Activated T-helper 1 cell treated with anti-CD3 and anti-CD28 coated beads, Interleukin-12 subunit alpha, Interleukin-12 subunit beta, Interleukin-2, Interleukin-4 antibody, amounts not matched to agents 30 ng/mL and 10 ng/mL and 1 ng/mL, durations not matched to agents 14 hours and 24 hours and 36 hours (primary cell): ENCODE measurements at regions of chr14 and their contacts with region 1.

Region 1: DNA sequence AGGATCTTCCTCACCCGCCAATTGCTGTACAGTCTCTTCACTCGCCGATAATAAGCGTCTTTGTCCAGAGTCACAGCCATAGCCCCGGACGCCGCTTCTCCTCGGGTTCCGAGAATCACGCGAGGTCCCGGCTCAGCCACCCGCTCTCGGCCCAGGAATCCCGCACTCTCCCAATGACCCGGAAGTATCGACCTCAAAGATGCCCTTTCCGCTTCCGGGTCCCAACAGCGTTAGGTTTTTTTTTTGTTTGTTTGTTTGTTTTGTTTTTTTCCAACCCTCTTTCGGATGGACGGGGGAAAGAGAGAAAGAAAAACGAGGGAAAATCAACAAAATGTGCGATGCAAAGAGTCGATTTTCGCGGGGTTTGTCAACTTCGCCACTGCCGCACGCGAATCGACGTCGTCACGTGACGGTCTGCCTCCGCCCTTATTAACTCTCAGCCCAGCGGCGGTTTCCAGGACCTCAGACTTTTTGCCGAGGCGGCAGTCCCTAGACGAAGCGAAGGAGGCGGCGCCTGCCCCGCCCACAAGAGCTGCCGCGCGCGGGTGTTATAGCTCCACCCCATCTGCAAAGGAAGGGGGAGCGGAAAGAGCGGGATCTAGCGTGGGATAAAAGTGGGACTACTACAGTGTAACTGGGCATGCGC is at the start of gene SUPT16H:
- DNase-seq: peak; percentile 92
- H3K4me3 Mint-ChIP-seq: peak within 1 kb of the TSS; percentile 96
- H3K27ac Mint-ChIP-seq: peak within 1 kb of the TSS; percentile 100
- H3K4me1 Mint-ChIP-seq: peaks cover 40% of the 10 kb centered on the region
- H3K27me3 Mint-ChIP-seq: no peaks in the 10 kb centered on the region
- total RNA-seq, gene SUPT16H: 162 and 166 TPM in 2 replicates

Region 2: GRCh38 chr14:21103710-21104447 is 280.1 kb before region 1 on chr14:
- intact Hi-C with region 1: loop called (anchors 1 kb)
- DNase-seq: peak; percentile 92
- H3K4me3 Mint-ChIP-seq: peak overlapping the region; percentile 93
- H3K27ac Mint-ChIP-seq: peak overlapping the region; percentile 97
- H3K4me1 Mint-ChIP-seq: peaks cover 56% of the 10 kb centered on the region
- H3K27me3 Mint-ChIP-seq: peaks cover 6% of the 10 kb centered on the region

Region 3: DNA sequence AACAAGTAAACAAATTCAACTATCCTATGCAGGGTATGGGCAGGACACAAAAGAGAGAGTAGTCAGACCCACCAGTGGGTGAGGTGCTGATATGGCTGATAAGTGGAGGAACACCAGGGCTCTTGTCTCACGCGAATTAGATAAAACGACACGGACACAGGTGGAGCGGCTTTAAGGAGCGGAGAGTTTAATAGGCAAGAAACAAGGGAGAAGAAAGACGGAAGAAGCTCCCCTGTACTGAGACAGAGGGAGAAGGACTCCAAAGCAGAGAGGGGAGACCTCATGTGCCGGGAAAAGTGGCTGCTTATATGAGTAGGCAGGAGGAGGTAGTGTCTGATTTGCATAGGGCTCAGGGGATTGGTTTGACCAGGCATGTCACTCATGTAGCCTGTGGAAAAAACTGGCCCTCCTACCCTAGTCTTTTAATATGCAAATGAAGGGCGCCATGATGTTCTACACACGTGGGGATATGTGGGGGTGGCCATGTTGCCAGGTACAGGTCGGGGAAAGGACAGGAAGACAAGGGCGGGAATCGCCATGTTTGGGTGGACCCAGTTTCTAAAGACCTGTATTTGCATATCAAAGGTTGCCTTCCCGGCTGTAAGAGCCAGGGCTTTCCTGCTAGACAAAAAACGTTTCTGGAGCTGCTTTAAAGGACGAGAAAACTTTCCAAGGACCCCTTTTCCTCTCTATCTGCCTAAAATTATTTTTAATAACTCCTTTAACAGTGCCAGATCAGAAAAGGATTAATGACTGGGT is 75.3 kb before region 1 on chr14:
- intact Hi-C with region 1: loop called (anchors 1 kb)
- DNase-seq: peak; percentile 65
- H3K4me3 Mint-ChIP-seq: peak overlapping the region; percentile 64
- H3K27ac Mint-ChIP-seq: peak overlapping the region; percentile 64
- H3K4me1 Mint-ChIP-seq: peaks cover 16% of the 10 kb centered on the region
- H3K27me3 Mint-ChIP-seq: peaks cover 3% of the 10 kb centered on the region

Region 4: GRCh38 chr14:21326972-21327371 is 57.0 kb before region 1 on chr14:
- intact Hi-C with region 1: no loop called
- DNase-seq: no peak
- H3K4me3 Mint-ChIP-seq: no peak overlapping the region
- H3K27ac Mint-ChIP-seq: no peak overlapping the region
- H3K4me1 Mint-ChIP-seq: no peaks in the 10 kb centered on the region
- H3K27me3 Mint-ChIP-seq: peaks cover 7% of the 10 kb centered on the region

Region 5: DNA sequence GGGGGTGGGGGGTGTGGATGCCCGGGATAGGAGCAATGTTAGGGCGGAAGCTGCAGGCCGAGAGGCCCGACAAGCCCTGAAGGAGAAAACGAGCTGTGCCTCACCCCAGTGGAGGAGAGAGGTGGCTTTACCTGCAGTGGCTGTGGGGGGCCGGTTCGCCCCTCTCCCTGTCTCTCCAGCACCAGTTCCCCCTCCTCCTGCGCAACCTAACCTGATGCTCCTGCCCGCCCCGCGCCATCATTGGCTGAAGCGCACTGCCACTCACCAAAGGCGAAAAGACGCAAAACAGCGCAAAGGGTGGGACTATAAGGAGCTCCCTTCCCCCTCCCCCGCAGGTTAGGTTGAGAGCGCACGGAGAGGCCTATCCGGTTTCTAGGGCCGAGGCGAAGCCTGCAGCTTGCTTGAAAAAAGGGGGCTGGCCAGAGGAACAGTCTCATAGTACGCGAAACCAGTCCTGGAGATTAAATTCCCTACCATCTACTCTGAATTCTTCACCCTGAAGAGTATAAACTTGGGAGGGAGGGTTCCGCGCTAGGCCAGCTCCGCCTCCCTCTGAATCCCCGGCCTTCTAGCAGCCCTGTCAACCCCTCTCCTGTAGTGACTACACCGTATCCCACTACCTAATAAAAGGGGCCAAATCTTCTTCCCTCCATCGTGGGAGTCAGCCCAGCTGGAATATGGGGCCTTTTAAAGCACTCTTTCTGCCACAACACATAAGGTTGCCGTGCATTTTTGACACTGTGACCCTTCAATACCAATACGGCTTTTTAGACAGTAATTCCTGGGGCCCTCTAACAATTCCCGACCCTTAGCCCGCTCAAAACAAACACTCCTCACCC is 53.3 kb after region 1 on chr14:
- intact Hi-C with region 1: loop called (anchors 1 kb)
- DNase-seq: peak; percentile 97
- H3K4me3 Mint-ChIP-seq: peak overlapping the region; percentile 93
- H3K27ac Mint-ChIP-seq: peak overlapping the region; percentile 73
- H3K4me1 Mint-ChIP-seq: peaks cover 67% of the 10 kb centered on the region
- H3K27me3 Mint-ChIP-seq: no peaks in the 10 kb centered on the region

Region 6: DNA sequence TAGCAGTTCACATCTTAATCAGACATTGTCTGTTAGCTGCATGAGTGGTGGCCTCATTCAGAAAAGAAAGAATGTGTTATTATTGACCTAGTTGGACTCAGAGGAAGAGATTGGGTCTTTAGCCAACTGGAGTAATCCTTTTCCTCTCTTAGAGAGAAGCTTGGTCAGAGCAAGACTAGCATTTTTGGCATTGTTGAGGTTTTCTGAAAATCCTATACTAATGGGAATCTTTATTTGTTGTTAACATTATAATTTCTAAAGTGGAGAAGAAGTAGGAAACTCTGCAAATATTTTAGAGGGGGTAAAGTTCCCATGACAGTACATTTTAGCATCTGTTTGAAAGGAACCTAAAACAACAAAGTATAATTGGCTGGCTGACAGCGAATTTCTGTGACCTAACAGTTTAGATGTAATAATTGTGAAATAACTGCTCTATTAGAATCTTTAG is 102.7 kb after region 1 on chr14:
- intact Hi-C with region 1: no loop called
- DNase-seq: no peak
- H3K4me3 Mint-ChIP-seq: no peak overlapping the region
- H3K27ac Mint-ChIP-seq: no peak overlapping the region
- H3K4me1 Mint-ChIP-seq: no peaks in the 10 kb centered on the region
- H3K27me3 Mint-ChIP-seq: no peaks in the 10 kb centered on the region

Region 7: DNA sequence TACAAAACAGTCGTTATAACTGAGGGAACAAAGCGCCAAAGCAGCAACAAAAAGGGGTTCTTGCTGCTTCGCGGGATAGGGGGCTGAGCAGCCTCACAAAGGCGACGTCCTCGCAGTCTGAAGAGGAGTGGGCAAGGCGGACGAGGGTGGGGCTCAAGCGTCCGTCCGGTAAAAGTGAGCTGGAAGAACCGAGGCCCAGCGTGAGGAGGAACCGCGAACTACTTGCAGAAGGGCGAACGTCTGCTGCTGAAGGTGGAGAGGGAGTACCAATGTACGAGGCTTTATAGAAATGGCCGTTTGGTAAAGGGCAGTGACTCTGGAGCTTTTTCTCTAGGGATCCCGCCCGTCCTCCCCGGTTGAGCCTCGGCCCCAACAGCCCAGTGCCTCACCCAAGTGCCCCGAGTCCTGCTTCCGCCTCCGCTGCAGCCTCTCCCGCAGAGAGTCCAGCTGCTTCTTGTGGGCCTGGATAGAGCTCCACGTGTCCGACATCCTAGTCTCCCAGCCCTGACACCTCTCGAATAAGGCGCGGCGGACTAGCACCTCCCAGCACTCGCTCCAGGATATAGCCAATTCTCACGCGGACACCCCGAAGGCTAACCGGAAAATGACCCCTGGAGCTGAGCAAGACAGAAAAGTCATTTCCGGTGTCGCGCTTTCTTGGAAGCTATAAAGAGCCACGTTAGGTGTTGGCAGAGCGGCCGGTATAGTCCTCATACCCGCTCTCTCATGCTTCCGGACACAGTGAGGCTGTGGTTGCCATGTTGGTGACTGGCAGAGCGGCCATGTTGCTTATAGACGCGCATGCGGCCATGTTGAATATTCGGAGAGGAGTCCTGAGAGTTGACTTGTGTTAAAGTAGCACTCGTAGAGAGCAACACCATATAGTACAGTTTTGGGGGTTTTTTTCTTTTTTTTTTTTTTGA is 127.0 kb after region 1 on chr14 and contains the start of gene METTL3:
- intact Hi-C with region 1: loop called (anchors 1 kb)
- DNase-seq: peak; percentile 93
- H3K4me3 Mint-ChIP-seq: peak within 1 kb of the TSS; percentile 99
- H3K27ac Mint-ChIP-seq: peak within 1 kb of the TSS; percentile 93
- H3K4me1 Mint-ChIP-seq: peaks cover 27% of the 10 kb centered on the region
- H3K27me3 Mint-ChIP-seq: peaks cover 12% of the 10 kb centered on the region
- total RNA-seq, gene METTL3: 75.1 and 77.7 TPM in 2 replicates

Region 8: GRCh38 chr14:21589317-21589716 is 205.3 kb after region 1 on chr14:
- intact Hi-C with region 1: no loop called
- DNase-seq: no peak
- H3K4me3 Mint-ChIP-seq: no peak overlapping the region
- H3K27ac Mint-ChIP-seq: no peak overlapping the region
- H3K4me1 Mint-ChIP-seq: peaks cover 7% of the 10 kb centered on the region
- H3K27me3 Mint-ChIP-seq: peaks cover 6% of the 10 kb centered on the region

Region 9: DNA sequence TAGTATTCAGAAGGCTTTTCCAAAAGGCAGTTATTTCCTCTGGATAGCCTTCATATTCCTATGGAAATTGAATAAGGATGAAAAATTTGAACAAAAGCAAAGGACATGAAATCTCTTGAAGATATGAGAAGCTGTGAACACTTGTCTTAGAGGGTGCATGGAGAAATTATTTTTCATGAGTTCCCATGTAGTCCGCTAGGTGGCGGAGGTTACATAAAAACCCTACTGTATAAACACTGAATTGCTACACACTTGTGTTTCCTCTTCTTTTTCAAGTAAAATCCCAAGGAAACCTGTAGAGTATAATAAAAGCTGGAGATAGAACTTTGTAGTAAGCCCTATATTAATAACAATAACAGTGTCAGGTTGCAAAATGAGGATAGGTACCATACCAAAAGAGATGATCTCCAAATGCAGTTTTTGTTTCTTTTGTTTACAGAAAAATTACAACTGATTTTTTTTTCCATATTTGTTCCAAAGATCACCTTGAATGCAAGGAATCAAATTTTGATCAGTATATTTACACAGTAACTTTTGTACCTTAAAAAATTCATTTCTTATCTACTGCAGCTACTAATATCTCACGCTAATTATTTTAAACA is 327.5 kb after region 1 on chr14:
- intact Hi-C with region 1: no loop called
- DNase-seq: no peak
- H3K4me3 Mint-ChIP-seq: no peak overlapping the region
- H3K27ac Mint-ChIP-seq: no peak overlapping the region
- H3K4me1 Mint-ChIP-seq: no peaks in the 10 kb centered on the region
- H3K27me3 Mint-ChIP-seq: peaks cover 6% of the 10 kb centered on the region

Region 10: GRCh38 chr14:22598099-22598899 is 1214.3 kb after region 1 on chr14 and contains the start of gene ABHD4:
- intact Hi-C with region 1: loop called (anchors 5 kb)
- DNase-seq: peak; percentile 72
- H3K4me3 Mint-ChIP-seq: peak within 1 kb of the TSS; percentile 97
- H3K27ac Mint-ChIP-seq: peak within 1 kb of the TSS; percentile 84
- H3K4me1 Mint-ChIP-seq: peaks cover 39% of the 10 kb centered on the region
- H3K27me3 Mint-ChIP-seq: no peaks in the 10 kb centered on the region
- total RNA-seq, gene ABHD4: 13.2 and 13.6 TPM in 2 replicates